Posterior vena cava (tissue), 2 donors: ENCODE measurements at regions of chr2 and their contacts with region 1.

Region 1: DNA sequence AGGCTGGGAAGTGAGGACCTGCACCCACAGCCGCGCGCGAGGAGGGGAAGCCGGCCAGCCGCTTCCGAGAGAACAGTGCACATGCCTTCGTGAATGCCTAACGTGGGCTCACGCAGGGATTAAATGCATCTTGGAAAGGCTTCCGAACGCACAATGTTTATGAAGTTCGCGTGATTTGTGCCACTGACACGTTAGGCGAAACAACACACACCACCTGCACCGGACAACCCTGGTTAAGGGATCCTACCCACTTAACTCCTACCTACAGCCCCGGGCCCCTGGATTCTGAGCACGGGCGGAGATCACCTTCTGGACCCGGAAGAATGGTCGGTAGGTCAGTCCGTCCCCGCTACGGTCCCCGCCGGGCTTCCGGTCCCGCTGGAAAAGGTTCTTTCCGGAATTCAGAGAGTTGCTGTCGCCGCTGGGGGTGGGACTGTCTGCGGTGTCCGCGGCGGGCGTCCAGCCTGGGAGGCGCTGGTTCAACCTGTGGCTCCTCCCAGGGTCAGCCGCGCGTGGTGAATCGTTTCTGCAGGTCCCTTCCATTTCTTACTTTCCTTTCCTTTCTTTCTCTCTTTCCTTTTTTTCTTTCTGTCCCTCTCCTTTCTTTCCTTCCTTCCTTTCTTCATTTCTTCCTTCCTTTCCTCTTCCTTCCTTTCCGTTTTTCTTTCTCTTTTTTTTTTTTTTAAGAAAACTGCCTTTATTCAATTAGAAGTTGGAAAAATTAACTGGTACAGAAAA is at the start of gene MTIF2:
- DNase-seq: peak; percentile 99
- total RNA-seq, gene MTIF2: 18.6 to 19.9 TPM

Region 2: GRCh38 chr2:55419679-55420438 is 150.8 kb after region 1 on chr2 and contains the start of gene CCDC88A:
- intact Hi-C with region 1: loop called in 1 of 2 experiments (anchors 10 kb)
- DNase-seq: peak; percentile 99
- total RNA-seq, gene CCDC88A: 63.4 to 77.1 TPM